ENCODE measurements at regions of chr20 and their contacts with region 1.

Region 1: GRCh38 chr20:34001378-34001777 is 7.7 kb downstream of the RALY start:
- DNase-seq: no peak
- ATAC-seq: no peak
- H3K4me3 ChIP-seq: no peak overlapping the region
- H3K27ac ChIP-seq: no peak overlapping the region
- H3K4me1 ChIP-seq: peaks cover 58% of the 10 kb centered on the region
- H3K27me3 ChIP-seq: no peaks in the 10 kb centered on the region
- CTCF ChIP-seq: no peak

Region 2: DNA sequence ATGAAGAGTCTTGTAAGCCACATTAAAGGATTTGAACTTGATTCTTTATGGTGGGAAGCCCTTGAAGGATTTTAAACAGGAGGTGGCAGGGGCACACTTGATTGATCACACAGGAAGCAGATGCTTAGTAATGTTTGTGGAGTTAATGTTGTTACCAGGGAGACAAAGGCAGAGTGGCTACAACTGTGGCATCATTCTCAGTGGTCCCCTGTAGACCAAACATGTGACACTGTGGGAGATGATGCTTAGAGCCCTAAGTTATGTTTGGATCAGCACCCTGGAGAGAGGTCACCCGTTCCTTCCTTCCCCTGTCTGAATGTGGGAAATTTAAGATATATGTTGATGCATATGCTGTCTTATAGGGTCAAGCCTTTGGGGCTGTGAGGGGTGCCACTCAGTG is 57.5 kb after region 1 on chr20:
- intact Hi-C with region 1: loop called (anchors 10 kb)
- DNase-seq: no peak
- ATAC-seq: peak; percentile 34
- H3K4me3 ChIP-seq: no peak overlapping the region
- H3K27ac ChIP-seq: no peak overlapping the region
- H3K4me1 ChIP-seq: peaks cover 28% of the 10 kb centered on the region
- H3K27me3 ChIP-seq: no peaks in the 10 kb centered on the region
- CTCF ChIP-seq: no peak

Measured in upper lobe of right lung (tissue), 1 donor.